ENCODE measurements at regions of chr10 and their contacts with region 1.

Region 1: GRCh38 chr10:73263948-73264347 is 11.5 kb upstream of the MRPS16 start:
- DNase-seq: no peak
- ATAC-seq: peak; percentile 30
- H3K4me3 Mint-ChIP-seq: no peak overlapping the region
- H3K27ac Mint-ChIP-seq: no peak overlapping the region
- H3K4me1 Mint-ChIP-seq: peaks cover 3% of the 10 kb centered on the region
- H3K27me3 Mint-ChIP-seq: peaks cover 6% of the 10 kb centered on the region

Region 2: DNA sequence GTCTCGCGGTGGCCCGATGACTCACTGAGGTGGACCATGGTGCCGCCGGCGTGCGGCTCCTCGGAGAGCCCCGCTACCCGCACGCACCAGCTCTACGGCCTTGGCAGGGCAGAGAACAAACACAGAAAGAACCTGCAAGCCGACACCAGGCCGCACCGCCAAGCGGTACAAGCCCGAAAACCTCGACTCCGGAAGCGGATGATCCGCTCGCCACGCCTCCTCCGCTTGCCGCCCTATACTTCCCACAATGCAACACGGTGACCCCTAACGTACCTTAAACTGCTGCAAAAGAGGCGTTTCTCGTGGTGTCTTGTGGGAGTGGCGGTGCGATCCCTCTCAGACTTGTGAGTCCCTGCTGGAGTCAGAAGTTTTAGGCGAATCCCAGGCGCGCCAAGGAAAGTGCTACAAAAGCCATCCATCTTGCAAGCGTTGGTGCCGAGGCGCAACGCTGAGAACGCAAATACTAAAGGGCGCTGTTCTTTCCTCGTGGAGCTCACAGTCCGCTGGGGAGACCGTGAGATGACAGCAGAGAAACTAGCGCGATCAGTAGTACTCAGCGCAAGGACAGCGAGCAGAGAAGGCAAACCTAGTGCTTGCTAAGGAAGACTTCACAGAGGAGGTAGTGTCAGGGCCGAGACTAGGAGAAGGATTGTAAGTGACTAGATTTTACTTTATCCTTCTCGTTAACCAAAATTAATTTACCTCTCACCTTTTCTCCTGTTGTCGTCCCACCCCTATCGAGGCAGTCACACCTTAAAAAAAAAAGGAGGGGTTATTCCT is 11.3 kb before region 1 on chr10 and contains the start of gene MRPS16:
- CTCF ChIA-PET with region 1: interaction called, 21 read pairs
- DNase-seq: peak; percentile 96
- ATAC-seq: peak; percentile 91
- H3K4me3 Mint-ChIP-seq: peak within 1 kb of the TSS; percentile 100
- H3K27ac Mint-ChIP-seq: peak within 1 kb of the TSS; percentile 94
- H3K4me1 Mint-ChIP-seq: peaks cover 40% of the 10 kb centered on the region
- H3K27me3 Mint-ChIP-seq: no peaks in the 10 kb centered on the region
- total RNA-seq, gene MRPS16: 79.2 to 110 TPM